ENCODE measurements at regions of chrX and their contacts with region 1.

Region 1: GRCh38 chrX:30713061-30713525 is 59.9 kb downstream of the GK start:
- DNase-seq: peak; percentile 73 to 76
- H3K4me3 ChIP-seq: no peak overlapping the region
- H3K4me1 ChIP-seq: no peaks in the 10 kb centered on the region
- H3K27me3 ChIP-seq: no peaks in the 10 kb centered on the region

Region 2: GRCh38 chrX:30570505-30570904 is 142.6 kb before region 1 on chrX:
- in situ Hi-C with region 1: loop called (anchors 10 kb)
- DNase-seq: peak; percentile 24 to 32
- H3K4me3 ChIP-seq: no peak overlapping the region
- H3K4me1 ChIP-seq: no peaks in the 10 kb centered on the region
- H3K27me3 ChIP-seq: no peaks in the 10 kb centered on the region; the same call in 1 of the 2 replicates

Region 3: DNA sequence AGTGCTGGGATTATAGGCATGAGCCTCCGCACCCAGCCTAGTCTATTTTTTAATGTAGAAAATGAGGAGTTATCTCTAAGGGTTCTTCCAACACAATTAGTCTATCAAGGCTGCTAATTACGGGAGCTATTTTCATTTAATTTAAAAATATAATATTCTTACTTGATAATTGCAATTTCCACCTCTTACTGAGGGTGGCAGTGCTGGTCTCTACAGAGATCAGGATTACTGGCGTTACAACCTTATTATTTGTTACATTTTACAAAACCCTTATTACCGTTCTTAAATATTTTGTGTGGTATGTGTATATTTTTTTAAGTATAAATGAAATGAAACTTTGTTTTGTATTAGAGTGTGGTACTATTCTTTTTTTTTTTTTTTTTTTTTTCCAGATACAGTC is 77.5 kb before region 1 on chrX:
- in situ Hi-C with region 1: loop called (anchors 10 kb)
- DNase-seq: peak in 1 of 2 experiments; percentile 33
- H3K4me3 ChIP-seq: no peak overlapping the region
- H3K4me1 ChIP-seq: no peaks in the 10 kb centered on the region
- H3K27me3 ChIP-seq: no peaks in the 10 kb centered on the region

Region 4: GRCh38 chrX:30931925-30932324 is 218.8 kb after region 1 on chrX:
- in situ Hi-C with region 1: no loop called
- DNase-seq: no peak
- H3K4me3 ChIP-seq: no peak overlapping the region
- H3K4me1 ChIP-seq: peaks cover 3% of the 10 kb centered on the region; the same call in 1 of the 2 replicates
- H3K27me3 ChIP-seq: no peaks in the 10 kb centered on the region

Region 5: GRCh38 chrX:31356275-31357263 is 643.5 kb after region 1 on chrX:
- in situ Hi-C with region 1: no loop called
- DNase-seq: peak; percentile 48 to 50
- H3K4me3 ChIP-seq: no peak overlapping the region
- H3K4me1 ChIP-seq: peaks cover 53% of the 10 kb centered on the region
- H3K27me3 ChIP-seq: peaks cover 7% of the 10 kb centered on the region